GM10248 (cell line): ENCODE measurements at regions of chr20 and their contacts with region 1.

Region 1: DNA sequence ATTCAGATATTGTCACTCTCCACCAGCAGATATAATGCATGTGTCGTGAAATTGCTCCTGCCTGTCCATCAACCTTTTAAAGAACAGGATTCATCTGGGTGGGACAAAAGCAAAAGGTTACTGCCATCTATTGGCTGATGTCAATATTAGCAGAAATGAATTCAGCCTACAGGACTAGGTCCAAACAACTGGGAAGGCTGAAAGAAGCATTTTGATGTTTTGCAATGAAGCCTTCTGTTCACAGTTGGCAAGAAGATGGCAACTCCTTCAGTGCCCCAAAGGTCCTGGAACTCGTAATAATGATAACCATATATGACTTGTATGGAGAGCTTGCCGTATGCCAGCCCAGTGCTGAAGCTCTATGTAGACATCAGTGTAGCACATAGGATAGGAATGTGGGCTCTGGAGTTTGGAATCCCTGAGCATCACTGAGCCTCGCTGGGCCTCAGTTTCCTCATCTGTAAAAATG is 7.5 kb downstream of the BCAS1 start:
- DNase-seq: peak; percentile 55
- CTCF ChIP-seq: peak; percentile 74

Region 2: DNA sequence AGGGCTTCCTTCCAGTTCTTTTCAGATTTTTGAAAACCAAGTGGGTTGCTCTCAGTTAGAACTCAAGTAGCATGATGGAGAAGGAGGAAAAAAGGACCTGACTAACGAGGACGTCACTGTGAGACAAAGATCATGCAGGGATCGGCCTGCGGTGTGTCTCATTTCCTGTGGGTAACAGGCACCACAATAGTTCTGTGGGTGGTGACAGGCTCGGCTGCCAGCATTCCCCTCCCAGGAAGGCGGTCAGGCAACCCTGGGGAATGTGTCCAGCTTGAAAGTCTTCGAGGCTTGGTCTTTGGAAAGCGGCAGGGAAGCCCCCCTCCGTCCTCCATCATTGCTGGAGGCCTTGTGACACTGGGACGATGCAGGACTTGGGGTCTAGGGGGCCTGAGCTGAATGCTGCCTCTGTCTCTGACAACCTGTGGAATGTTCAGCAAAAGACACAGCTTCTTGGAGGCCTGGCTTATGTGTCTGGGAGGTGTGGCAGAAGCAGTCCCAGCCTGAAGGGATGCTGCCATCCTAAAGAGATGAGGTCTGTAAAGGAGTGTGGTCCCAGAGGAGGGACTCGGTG is 113.4 kb before region 1 on chr20:
- CTCF ChIA-PET with region 1: interaction called, 20 read pairs
- POLR2A ChIA-PET with region 1: no interaction called
- DNase-seq: peak; percentile 51
- CTCF ChIP-seq: no peak

Region 3: DNA sequence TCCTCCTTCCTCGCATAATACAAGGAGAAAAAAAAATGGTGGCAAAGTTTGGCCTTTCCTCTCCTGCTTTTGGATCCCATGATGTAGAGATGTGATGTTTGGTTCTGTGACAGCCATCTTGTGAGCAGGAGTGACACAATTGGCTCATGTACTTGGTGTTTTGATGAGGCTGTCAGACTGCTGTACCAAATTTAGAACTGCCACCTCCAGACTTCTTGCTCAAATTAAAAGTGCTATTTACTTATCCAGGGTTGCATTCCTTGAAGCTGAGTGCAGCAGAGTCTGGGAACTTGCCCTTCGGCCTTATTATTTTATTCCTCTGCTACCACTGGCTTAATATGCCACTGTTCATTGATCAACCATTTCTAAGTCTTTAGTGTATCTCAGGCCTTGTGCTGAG is 14.4 kb before region 1 on chr20:
- CTCF ChIA-PET with region 1: interaction called, 12 read pairs
- POLR2A ChIA-PET with region 1: no interaction called
- DNase-seq: no peak
- CTCF ChIP-seq: no peak

Region 4: DNA sequence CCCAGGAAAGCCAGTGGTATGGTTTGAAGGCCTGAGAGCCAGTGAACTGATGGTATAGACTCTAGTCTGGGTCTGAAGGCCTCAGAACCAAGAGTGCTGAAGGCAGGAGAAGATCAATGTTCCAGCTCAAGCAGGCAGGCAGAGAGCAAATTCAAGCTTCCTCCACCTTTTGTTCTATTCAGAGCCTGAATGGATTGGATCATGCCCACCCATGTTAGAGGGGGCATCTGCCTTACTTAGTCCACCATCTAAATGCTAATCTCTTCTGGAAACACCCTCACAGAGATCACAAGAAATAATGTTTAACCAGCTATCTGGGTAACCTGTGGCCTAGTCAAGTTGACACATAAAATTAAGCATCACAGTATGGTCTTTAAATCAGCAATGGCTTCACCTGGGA is 183.7 kb after region 1 on chr20:
- CTCF ChIA-PET with region 1: no interaction called
- POLR2A ChIA-PET with region 1: interaction called, 10 read pairs
- DNase-seq: no peak
- CTCF ChIP-seq: no peak